ENCODE measurements at regions of chr13 and their contacts with region 1.

Region 1: DNA sequence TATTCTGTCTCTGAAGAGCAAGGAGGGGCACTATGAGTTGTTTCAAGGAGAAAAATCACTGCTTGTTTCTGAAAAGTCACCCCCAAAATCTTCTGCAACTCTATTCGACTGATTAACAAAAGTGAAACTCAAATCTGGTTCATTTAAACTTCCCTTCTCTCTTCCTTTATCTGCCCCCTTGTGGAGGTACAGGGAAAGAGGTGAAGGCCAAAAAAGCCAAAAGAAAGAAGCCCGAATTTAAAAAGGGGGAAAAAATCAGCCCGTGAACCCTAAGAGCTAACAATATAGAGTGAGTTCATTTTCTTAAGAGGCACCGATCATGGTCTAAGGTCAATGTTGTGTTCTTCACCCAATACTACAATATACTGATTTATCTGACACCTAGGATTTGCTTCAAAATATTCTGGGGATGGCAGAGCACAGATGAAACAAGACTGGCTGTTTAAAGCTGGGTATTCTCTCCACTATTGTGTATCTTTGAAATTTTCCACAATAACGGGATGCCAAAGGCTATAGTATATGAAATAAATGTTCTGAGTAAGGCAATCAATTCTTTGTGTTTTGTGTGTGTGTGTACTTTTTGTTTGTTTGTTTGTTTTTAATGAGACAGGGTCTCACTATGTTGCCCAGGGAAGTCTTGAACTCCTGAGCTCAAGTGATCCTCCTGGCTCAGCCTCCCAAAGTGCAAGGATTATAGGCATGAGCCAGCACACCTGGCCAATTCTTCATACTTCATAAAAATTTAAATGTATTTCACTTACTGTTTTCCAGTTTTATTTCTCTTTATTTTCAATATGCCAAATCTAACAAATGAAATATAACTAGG is 55.0 kb upstream of the EEF1AKMT1 start:
- DNase-seq: peak; percentile 64
- ATAC-seq: peak; percentile 40
- H3K4me3 ChIP-seq: peak overlapping the region; percentile 30; the same call in 1 of the 2 replicates
- H3K27ac ChIP-seq: peak overlapping the region; percentile 40; the same call in 1 of the 2 replicates
- H3K4me1 ChIP-seq: peaks cover 7% of the 10 kb centered on the region
- H3K27me3 ChIP-seq: no peaks in the 10 kb centered on the region
- CTCF ChIP-seq: peak; percentile 85
- POLR2A ChIP-seq: no peak
- RAD21 ChIP-seq: peak; percentile 85

Region 2: DNA sequence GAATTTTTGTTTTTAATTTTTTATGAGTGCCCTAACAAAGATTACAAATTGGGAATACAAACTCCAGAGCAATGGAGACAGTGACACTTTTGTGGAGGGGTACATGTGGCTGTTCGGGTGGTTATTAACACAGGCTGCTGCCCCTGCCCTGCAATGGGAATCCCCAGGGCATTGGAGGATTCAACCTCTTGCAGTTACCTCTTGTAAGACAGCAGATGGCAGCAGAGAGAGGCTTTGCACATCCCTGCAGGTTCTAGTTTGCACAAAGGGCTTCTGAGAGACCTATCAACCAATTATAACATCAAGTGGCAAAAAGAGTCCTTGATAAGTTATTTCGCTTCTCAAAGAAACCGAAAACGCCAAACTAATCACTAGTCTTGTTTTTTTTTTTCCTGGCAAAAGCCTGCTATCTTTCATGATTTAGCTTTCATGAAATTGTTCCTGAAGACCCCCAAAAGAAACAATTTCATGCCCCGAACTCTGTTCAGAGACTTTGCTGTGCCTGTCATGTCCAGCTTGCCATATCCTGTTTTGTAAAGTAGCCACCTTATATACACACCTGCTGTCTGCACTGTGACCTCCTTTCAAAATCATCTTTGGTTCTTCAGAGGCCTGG is 646.4 kb before region 1 on chr13:
- CTCF ChIA-PET with region 1: no interaction called
- POLR2A ChIA-PET with region 1: no interaction called
- dilution Hi-C with region 1: no loop called
- in situ Hi-C with region 1: loop called (anchors 25 kb)
- intact Hi-C with region 1: no loop called
- DNase-seq: peak; percentile 80
- ATAC-seq: peak; percentile 99
- H3K4me3 ChIP-seq: no peak overlapping the region
- H3K27ac ChIP-seq: no peak overlapping the region
- H3K4me1 ChIP-seq: no peaks in the 10 kb centered on the region
- H3K27me3 ChIP-seq: peaks cover 19% of the 10 kb centered on the region
- CTCF ChIP-seq: peak; percentile 79
- POLR2A ChIP-seq: no peak
- RAD21 ChIP-seq: peak; percentile 87

Region 3: GRCh38 chr13:20495082-20496023 is 333.4 kb before region 1 on chr13:
- CTCF ChIA-PET with region 1: interaction called, 9 read pairs
- POLR2A ChIA-PET with region 1: no interaction called
- dilution Hi-C with region 1: no loop called
- in situ Hi-C with region 1: loop called (anchors 10 kb)
- intact Hi-C with region 1: loop called (anchors 1 kb)
- DNase-seq: peak; percentile 72
- ATAC-seq: peak; percentile 91
- H3K4me3 ChIP-seq: no peak overlapping the region
- H3K27ac ChIP-seq: no peak overlapping the region
- H3K4me1 ChIP-seq: peaks cover 5% of the 10 kb centered on the region
- H3K27me3 ChIP-seq: no peaks in the 10 kb centered on the region
- CTCF ChIP-seq: peak; percentile 94
- POLR2A ChIP-seq: no peak
- RAD21 ChIP-seq: peak; percentile 98

Region 4: GRCh38 chr13:20713751-20714150 is 115.0 kb before region 1 on chr13:
- CTCF ChIA-PET with region 1: interaction called, 3 read pairs
- POLR2A ChIA-PET with region 1: no interaction called
- dilution Hi-C with region 1: no loop called
- in situ Hi-C with region 1: loop called (anchors 5 kb)
- intact Hi-C with region 1: loop called (anchors 1 kb)
- DNase-seq: peak; percentile 39
- ATAC-seq: no peak
- H3K4me3 ChIP-seq: no peak overlapping the region
- H3K27ac ChIP-seq: no peak overlapping the region
- H3K4me1 ChIP-seq: peaks cover 9% of the 10 kb centered on the region
- H3K27me3 ChIP-seq: peaks cover 1% of the 10 kb centered on the region; the same call in 1 of the 2 replicates
- CTCF ChIP-seq: no peak
- POLR2A ChIP-seq: no peak
- RAD21 ChIP-seq: no peak

Region 5: DNA sequence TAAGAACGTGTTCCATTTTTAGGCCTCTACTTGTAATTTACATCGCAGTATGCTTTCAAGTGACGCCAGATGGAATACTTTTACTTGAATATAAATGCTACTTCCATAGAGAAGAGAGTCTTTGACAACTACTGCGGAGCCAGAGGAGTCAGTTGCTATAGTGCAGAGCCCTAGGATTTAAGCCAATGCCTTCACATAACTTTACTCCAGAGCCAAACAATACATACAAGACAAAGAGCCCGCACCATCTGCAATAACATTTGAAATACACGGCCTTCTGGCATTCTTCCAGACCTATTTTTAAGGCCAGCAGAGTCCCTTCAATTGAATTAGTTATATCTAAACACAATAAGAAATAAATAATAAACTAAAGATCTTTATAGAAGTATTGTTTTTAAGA is 14.4 kb after region 1 on chr13:
- CTCF ChIA-PET with region 1: interaction called, 10 read pairs
- POLR2A ChIA-PET with region 1: no interaction called
- dilution Hi-C with region 1: no loop called
- in situ Hi-C with region 1: no loop called
- intact Hi-C with region 1: no loop called
- DNase-seq: peak; percentile 18
- ATAC-seq: no peak
- H3K4me3 ChIP-seq: no peak overlapping the region
- H3K27ac ChIP-seq: no peak overlapping the region
- H3K4me1 ChIP-seq: 0 out of 2 replicates have a peak, but pooled peaks cover 2% of the 10 kb centered on the region
- H3K27me3 ChIP-seq: no peaks in the 10 kb centered on the region
- CTCF ChIP-seq: no peak
- POLR2A ChIP-seq: no peak
- RAD21 ChIP-seq: no peak

Measured in IMR-90 (cell line).